PC-9 (cell line): ENCODE measurements at regions of chr7 and their contacts with region 1.

Region 1: DNA sequence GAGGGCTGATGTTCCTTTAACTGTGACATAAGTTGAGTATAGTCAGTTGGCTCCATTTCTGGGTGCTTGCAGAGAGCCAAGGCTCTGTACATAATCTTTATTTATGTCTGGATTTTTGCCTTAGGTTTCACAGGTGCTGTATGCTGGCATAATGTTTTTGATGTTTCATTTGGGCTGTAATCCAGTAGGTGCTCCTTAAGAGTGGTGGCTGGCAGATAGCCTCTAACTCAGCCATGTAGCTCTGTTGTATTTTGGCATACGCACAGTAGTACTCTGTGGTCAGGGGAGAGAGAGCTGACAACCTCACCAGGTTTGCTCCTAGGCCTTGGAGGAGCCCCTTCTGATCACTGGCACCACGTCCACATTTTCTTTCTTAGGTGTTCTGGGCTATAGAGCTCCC is 61.1 kb downstream of the RNF133 start:
- DNase-seq: no peak
- H3K4me3 ChIP-seq: no peak overlapping the region
- H3K27ac ChIP-seq: no peak overlapping the region
- H3K4me1 ChIP-seq: no peaks in the 10 kb centered on the region
- H3K27me3 ChIP-seq: no peaks in the 10 kb centered on the region
- CTCF ChIP-seq: no peak

Region 2: DNA sequence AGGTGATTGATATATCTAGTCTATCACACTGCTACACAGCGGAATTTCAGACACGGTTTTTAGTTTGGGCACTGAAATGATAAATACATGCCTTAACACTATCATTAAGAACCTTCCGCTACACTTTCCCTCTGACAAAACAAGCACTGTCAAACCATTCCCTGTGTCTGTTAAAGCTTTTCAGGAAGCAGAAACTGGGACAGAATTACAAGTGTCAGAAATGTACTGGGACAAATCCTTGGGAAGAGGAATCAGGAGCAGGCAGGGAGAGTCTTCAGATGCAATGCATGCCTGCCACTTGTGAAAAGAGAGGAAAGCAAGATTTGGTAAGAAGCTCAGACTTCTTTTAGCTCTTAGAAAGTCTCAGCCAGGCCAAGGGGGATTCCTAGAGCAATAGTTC is 961.6 kb before region 1 on chr7:
- CTCF ChIA-PET with region 1: no interaction called
- POLR2A ChIA-PET with region 1: interaction called, 11 read pairs
- intact Hi-C with region 1: no loop called
- DNase-seq: no peak
- H3K4me3 ChIP-seq: no peak overlapping the region
- H3K27ac ChIP-seq: no peak overlapping the region
- H3K4me1 ChIP-seq: no peaks in the 10 kb centered on the region
- H3K27me3 ChIP-seq: no peaks in the 10 kb centered on the region
- CTCF ChIP-seq: no peak

Region 3: DNA sequence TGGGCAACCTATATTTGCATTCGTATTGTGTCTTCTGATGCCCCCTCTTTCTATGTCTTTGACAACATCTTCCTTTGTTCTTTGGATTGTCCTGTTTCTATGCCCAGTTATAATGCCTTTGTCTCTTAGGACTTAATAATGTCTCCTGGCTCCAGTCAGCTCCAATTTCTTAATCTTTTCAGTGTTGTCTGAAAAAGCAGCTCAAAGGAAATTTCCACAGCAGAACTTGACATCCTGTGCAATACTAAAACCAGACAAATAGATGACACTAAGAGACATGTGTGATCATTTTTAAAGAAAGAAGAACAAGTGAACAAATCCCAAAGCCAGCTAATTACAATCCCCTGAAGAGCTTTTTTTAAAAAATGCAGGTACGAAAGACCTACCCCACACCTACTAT is 112.6 kb after region 1 on chr7:
- CTCF ChIA-PET with region 1: no interaction called
- POLR2A ChIA-PET with region 1: no interaction called
- intact Hi-C with region 1: no loop called
- DNase-seq: no peak
- H3K4me3 ChIP-seq: no peak overlapping the region
- H3K27ac ChIP-seq: no peak overlapping the region
- H3K4me1 ChIP-seq: no peaks in the 10 kb centered on the region
- H3K27me3 ChIP-seq: no peaks in the 10 kb centered on the region
- CTCF ChIP-seq: no peak